ENCODE measurements at regions of chr3 and their contacts with region 1.

Region 1: DNA sequence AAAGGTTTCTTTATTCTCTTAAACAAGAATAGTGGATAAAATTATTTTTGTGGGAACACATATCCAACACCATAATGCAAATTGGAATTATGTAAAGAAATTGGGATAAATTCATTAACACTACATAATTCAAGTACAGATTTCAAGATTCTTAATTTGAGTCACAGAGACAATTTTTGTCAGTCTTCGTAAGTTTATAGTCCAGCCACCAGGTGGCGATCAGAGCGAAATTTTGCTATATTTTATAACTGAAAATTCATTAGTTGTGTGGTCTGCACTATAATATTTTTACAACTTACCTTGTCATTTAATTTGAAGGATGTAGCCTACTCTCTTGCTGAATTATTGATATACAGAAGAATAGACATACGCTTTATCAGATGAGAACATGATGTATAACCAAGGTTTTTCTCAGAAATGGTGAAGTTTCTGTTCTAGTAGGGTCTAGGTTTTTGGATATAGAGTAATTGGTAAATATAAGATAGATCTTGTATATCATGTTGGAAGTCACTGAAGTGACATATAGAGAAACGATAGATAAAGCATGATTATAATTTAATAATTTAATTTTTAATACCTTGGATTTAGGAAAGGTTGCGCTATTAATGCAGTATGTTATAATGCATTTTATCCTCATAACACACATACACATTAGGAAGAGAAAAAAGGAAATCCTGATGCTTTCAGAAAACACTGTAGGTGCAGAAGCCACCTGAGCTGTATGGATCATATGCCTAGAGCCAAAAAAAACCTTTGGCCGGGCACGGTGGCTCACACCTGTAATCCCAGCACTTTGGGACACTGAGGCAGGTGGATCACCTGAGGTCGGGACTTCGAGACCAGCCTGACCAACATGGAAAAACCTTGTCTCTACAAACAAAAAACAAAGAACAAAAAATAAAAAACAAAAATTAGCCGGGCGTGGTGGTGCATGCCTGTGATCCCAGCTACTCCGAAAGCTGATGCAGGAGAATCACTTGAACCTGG is 31.7 kb downstream of the PLSCR4 start:
- DNase-seq: peak; percentile 40
- H3K4me3 ChIP-seq: no peak overlapping the region
- H3K27ac ChIP-seq: no peak overlapping the region
- H3K4me1 ChIP-seq: no peaks in the 10 kb centered on the region
- CTCF ChIP-seq: peak; percentile 92

Region 2: DNA sequence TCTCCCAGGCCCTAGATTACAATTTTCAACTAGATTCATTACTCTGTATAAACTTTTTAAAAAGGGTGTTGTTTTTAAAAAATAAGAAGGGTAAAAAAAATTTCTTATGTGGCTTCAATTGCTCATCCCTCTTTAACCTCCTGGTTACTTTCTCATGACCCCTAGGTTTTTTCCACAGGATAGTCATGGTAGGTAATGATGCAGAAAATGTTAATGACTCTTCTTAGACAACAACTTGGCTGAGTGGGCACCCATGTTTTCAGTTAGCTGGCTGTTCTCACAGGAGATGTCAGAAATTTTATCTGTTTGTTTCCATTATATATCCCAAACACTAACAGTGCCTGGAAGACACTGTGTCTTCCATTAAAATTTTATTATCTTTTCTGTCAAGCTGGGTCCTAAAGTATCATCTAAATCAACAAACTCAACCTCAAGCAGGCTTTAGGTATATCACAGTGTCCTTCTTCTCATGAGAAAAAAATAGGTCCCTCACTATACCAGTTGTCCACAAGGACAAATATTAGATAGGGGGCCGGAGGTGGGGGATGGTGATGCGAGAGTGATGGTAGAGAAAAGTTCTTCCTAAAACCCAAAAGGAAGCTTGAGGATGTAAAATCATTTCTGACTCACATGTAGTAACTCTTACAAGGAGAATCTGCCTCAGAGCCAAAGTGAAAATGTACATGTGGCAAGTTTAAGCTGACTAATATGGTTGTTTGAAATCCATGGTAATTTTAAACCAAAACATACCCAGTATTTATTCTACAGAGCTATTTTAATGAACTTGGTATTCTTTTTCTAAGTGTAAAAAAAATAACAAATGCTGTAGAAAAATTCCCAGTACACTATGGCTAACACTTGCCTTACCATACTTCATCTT is 101.5 kb before region 1 on chr3:
- CTCF ChIA-PET with region 1: no interaction called
- POLR2A ChIA-PET with region 1: no interaction called
- intact Hi-C with region 1: no loop called
- DNase-seq: no peak
- H3K4me3 ChIP-seq: no peak overlapping the region
- H3K27ac ChIP-seq: no peak overlapping the region
- H3K4me1 ChIP-seq: no peaks in the 10 kb centered on the region
- CTCF ChIP-seq: no peak

Region 3: GRCh38 chr3:146577662-146578061 is 358.5 kb after region 1 on chr3:
- CTCF ChIA-PET with region 1: no interaction called
- POLR2A ChIA-PET with region 1: interaction called, 3 read pairs
- intact Hi-C with region 1: loop called (anchors 1 kb)
- DNase-seq: peak; percentile 34
- H3K4me3 ChIP-seq: no peak overlapping the region
- H3K27ac ChIP-seq: no peak overlapping the region
- H3K4me1 ChIP-seq: no peaks in the 10 kb centered on the region
- CTCF ChIP-seq: peak; percentile 69

Measured in OCI-LY7 (cell line).